ENCODE measurements at regions of chr1 and their contacts with region 1.

Region 1: DNA sequence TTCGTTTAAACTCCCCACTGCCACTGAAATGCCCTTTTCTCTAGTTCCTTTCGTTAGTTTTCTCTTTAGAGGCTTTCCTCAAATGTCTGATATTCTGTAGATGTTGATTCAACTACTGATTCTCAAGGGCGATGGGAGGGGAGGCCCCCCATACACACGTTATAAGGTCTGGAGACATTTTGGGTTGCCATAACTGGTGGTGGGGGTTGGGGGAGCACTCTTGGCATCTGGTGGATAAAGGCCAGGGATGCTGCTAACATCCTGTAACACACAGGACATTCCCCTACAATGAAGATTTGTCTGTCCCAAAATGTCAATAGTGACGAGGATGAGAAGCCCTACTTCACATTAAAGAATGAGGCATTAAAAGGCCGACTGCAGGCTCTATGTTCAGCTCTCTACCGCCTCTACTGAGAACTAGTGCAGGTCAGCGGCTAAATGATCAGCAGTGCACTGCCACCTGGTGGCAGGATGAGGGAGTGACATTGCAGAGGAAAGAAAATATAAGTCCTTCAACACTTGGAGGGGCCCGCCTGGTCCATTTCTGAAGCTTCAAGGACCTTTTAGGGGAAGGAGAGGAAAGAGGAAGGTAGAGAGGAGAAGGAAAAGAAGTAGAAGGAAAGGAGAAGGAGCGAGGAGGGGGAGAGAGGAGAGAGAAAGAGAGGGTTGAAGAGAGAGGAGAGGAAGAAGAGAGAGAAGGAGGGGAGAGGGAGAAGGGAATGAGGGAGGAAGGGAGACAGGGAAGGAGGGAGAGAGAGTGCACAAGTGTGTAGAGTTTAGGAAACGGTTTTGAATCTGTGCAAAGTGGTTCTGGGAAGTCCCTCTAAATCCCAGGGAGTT is 29.4 kb downstream of the ALG14 start:
- DNase-seq: peak; percentile 55 to 87 (median 70)
- ATAC-seq: peak; percentile 94 to 99 (median 96)
- H3K4me3 ChIP-seq: no peak overlapping the region
- H3K4me3 Mint-ChIP-seq: no peak overlapping the region
- H3K27ac ChIP-seq: no peak overlapping the region
- H3K27ac Mint-ChIP-seq: no peak overlapping the region
- H3K4me1 ChIP-seq: peaks cover 0 to 4% of the 10 kb centered on the region in 2 experiments
- H3K4me1 Mint-ChIP-seq: no peaks in the 10 kb centered on the region
- H3K27me3 ChIP-seq: no peaks in the 10 kb centered on the region
- H3K27me3 Mint-ChIP-seq: no peaks in the 10 kb centered on the region

Region 2: DNA sequence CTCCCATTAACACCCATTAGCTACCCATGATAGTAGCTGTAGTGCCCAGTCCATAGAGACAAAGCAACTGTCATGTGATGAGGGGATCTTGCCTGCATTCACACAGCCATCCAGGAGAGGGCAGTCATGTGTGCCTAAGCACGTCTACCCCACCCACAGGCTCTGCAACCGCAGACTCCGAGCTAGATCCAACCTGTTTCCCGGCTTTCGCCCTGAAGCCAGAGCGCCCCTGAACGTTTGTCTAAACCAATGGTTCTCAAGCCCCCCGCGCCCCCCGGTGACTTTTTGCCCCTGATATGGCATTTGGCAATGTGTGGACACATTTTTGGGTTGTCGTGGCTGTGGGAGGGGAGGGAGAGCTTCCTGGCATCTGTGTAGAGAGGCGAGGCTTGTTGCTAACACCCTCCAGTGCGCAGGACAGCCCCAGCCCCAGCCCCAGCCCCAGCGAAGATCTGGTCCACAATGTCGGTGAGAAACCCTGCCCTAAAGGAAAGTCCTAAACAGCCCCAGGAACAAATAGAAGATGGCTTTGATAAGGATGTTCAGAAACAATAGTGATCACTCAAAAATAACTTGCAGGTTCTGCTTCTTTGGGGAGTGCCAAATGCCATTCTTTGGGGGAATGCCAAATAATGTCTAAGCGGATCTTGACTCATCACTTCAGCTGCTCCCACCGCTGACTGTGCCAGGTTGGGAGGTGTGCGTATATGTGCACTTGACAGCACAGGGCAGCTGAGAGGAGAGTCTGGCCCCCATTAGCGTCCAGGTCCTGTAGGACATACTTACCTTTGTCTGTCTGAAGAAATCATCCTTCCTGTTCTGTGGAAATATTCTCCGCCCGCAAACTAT is 188.7 kb before region 1 on chr1:
- CTCF ChIA-PET with region 1: interaction called, 67 to 120 read pairs
- POLR2A ChIA-PET with region 1: no interaction called
- DNase-seq: peak; percentile 42 to 88 (median 66)
- ATAC-seq: peak; percentile 94 to 98 (median 96)
- H3K4me3 ChIP-seq: peak overlapping the region; percentile 51 to 64
- H3K4me3 Mint-ChIP-seq: no peak overlapping the region
- H3K27ac ChIP-seq: no peak overlapping the region
- H3K27ac Mint-ChIP-seq: no peak overlapping the region
- H3K4me1 ChIP-seq: no peaks in the 10 kb centered on the region
- H3K4me1 Mint-ChIP-seq: no peaks in the 10 kb centered on the region
- H3K27me3 ChIP-seq: peaks cover 3 to 20% of the 10 kb centered on the region in 2 experiments
- H3K27me3 Mint-ChIP-seq: peaks cover 8% of the 10 kb centered on the region in 2 donors

Region 3: DNA sequence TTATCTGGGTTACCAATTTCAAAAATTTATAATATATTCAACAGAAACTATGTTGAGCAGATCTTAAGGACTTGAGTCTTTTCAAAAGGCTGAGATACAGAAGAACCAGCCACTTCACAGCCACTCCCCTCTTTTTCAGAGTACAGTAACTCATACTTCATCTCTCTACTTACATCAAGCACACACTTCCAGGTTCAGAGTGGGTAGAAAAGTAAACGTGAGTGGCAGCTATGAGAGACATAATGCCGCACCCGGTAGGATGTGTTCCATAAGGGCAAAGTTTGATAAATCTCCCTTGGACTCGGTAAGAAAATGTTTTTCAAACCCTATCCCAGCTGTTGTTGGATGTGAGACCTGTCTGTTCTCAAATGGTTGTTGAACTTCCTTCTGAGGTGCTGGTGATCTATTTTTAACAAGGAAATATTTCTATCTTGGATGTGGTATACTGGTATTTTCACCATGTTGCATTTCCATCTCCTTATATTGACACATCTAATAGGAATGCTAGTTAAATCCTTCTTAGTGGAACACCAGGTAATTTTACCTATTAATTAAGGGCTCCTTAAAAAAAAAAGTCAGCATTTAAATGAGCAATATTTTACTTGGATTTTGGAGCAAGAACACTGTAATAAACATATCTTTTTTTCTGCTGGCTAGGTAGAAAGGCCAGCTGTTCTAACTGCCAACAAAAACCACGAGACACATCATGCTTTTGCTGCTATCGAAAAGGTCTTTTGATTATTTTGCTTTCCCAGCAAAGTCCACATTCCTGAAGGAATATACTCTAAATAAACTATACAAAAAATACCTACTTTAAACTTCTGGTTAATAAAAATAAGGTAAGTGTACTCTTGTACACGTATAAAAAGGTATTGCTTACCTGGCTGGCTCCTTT is 144.6 kb before region 1 on chr1:
- CTCF ChIA-PET with region 1: interaction called in 1 of 2 experiments, 5 read pairs
- POLR2A ChIA-PET with region 1: interaction called in 1 of 2 experiments, 13 read pairs
- DNase-seq: no peak
- ATAC-seq: no peak
- H3K4me3 ChIP-seq: no peak overlapping the region
- H3K4me3 Mint-ChIP-seq: no peak overlapping the region
- H3K27ac ChIP-seq: no peak overlapping the region
- H3K27ac Mint-ChIP-seq: no peak overlapping the region
- H3K4me1 ChIP-seq: no peaks in the 10 kb centered on the region
- H3K4me1 Mint-ChIP-seq: no peaks in the 10 kb centered on the region
- H3K27me3 ChIP-seq: no peaks in the 10 kb centered on the region
- H3K27me3 Mint-ChIP-seq: no peaks in the 10 kb centered on the region

Region 4: DNA sequence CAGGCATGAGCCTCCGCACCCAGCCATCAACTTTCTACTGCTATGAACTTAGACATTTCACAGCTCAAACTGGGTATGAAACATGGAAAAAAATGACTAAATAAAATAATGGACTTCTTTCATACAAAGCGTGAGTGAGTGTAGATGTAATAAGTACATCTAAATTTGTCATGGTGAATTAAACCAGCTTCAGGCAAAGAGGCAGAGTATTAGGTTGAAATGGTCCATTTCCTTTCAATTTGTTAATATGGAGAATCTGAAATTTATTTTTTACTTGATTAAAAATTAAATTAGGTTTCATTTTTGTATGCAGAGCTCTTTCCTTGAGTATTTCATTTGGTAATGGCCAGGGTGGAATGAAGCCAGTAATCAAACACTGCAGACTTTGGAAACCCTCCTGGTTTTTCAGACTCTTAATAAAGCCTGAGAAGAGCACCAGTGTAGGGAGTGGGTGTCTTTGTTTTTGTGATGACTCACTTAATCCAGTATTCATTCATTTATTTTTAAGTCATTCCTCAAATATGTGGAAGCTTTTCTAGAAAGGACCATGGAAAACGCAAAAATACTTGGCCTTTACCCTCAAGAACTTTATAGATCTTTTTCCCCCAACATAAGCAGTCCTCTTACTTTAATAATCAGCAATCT is 19.8 kb before region 1 on chr1:
- CTCF ChIA-PET with region 1: no interaction called
- POLR2A ChIA-PET with region 1: no interaction called
- DNase-seq: no peak
- ATAC-seq: no peak
- H3K4me3 ChIP-seq: no peak overlapping the region
- H3K4me3 Mint-ChIP-seq: no peak overlapping the region
- H3K27ac ChIP-seq: no peak overlapping the region
- H3K27ac Mint-ChIP-seq: no peak overlapping the region
- H3K4me1 ChIP-seq: no peaks in the 10 kb centered on the region
- H3K4me1 Mint-ChIP-seq: no peaks in the 10 kb centered on the region
- H3K27me3 ChIP-seq: no peaks in the 10 kb centered on the region
- H3K27me3 Mint-ChIP-seq: no peaks in the 10 kb centered on the region